ENCODE measurements at regions of chr1 and their contacts with region 1.

Region 1: GRCh38 chr1:26921540-26922430 is at the start of gene NUDC:
- DNase-seq: peak; percentile 96
- ATAC-seq: peak; percentile 97
- H3K4me3 Mint-ChIP-seq: peak within 1 kb of the TSS; percentile 91
- H3K27ac Mint-ChIP-seq: peak within 1 kb of the TSS; percentile 91
- H3K4me1 Mint-ChIP-seq: peaks cover 24% of the 10 kb centered on the region
- H3K27me3 Mint-ChIP-seq: no peaks in the 10 kb centered on the region
- total RNA-seq, gene NUDC: 59.0 to 59.1 TPM

Region 2: DNA sequence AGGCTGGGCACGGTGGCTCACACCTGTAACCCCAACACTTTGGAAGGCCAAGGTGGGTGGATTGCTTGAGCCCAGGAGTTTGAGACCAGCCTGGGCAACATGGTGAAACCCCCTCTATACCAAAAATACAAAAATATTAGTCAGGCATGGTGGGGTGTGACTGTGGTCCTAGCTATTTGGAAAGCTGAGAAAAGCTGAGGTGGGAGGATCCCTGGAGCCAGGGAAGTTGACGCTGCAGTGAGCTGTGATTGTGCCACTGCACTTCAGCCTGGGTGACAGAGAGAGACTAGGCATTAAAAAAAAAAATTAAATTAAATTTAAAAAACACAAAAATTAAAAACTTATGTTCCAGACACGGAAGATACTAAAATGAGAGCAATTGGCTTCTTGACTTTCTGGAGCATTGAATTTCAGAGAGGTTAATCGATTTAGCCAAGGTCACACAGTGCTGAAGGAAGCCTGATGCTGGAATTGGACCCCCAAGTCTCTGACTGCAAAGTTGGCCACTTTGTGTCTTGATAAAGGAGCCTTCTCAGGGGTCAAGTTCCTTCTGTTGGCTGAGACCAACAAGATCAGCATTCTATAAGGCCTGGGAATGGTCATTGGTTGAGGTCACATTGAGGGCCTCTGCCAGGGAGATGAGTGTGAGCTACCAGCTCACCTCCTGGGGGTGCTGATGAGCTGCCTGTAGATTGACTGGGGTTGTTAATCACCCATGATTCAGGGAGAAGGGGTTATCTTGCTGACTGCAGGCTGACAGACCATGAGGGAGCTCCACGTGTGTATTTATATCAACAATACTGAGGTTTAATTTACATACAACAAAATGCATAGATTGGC is 337.9 kb before region 1 on chr1:
- POLR2A ChIA-PET with region 1: no interaction called
- DNase-seq: no peak
- ATAC-seq: peak; percentile 34
- H3K4me3 Mint-ChIP-seq: no peak overlapping the region
- H3K27ac Mint-ChIP-seq: no peak overlapping the region
- H3K4me1 Mint-ChIP-seq: peaks cover 14% of the 10 kb centered on the region
- H3K27me3 Mint-ChIP-seq: no peaks in the 10 kb centered on the region

Region 3: DNA sequence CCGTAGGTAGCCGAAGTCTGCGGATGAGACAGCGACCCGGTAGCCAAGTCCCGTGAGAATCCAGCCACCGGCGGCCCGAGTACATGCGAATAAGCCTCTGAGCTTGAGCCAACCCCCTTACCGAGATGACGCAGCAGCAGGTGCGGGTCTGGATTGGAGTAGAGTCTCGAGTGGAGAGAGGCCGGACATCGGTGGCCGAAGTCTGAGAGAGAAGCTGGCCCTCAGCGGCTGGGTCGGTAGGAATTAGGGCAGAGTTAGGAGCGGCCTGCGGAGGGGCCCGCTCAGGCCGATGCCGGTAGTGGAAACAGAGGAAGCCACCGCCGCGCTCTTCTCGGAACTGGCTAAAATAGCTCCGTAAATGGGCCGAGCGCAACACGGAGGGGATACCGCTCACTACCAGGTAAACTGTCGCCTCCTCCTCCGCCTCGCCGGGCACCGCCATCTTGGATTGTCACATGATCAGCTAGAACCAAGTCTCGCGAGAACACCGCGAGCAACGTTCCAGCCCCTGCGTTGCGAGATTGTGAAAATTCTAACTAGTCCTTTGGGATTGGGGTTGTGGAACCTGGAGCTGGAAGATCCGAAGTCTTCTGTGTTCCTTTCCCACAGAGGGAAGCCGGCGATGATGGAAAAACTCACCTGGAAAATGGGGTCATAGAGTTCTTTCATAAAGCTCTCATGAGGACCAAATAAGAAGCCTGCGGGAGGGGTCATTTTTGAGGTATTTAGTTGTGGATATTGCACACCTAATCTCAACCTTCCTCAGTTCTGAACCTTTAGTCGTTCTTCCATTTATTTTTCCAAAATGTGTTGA is 21.6 kb before region 1 on chr1 and contains the start of gene GPATCH3:
- POLR2A ChIA-PET with region 1: interaction called, 14 read pairs
- DNase-seq: peak; percentile 85
- ATAC-seq: peak; percentile 87
- H3K4me3 Mint-ChIP-seq: peak within 1 kb of the TSS; percentile 98
- H3K27ac Mint-ChIP-seq: peak within 1 kb of the TSS; percentile 98
- H3K4me1 Mint-ChIP-seq: peaks cover 23% of the 10 kb centered on the region
- H3K27me3 Mint-ChIP-seq: no peaks in the 10 kb centered on the region
- total RNA-seq, gene GPATCH3: 17.3 to 19.6 TPM

Measured in activated naive CD8-positive, alpha-beta T cell treated with anti-CD3 and anti-CD28 coated beads, Interleukin-2, amount 10 ng/mL, durations not matched to agents 7 days and 5 days (primary cell).